Activated CD4-positive, alpha-beta memory T cell treated with anti-CD3 and anti-CD28 coated beads for 36 hours (primary cell): ENCODE measurements at regions of chr4 and their contacts with region 1.

Region 1: GRCh38 chr4:56301181-56302076 is 85.9 kb downstream of the AASDH start:
- DNase-seq: peak; percentile 78
- H3K4me3 Mint-ChIP-seq: peak overlapping the region; percentile 13
- H3K27ac Mint-ChIP-seq: no peak overlapping the region
- H3K4me1 Mint-ChIP-seq: peaks cover 7% of the 10 kb centered on the region
- H3K27me3 Mint-ChIP-seq: no peaks in the 10 kb centered on the region

Region 2: DNA sequence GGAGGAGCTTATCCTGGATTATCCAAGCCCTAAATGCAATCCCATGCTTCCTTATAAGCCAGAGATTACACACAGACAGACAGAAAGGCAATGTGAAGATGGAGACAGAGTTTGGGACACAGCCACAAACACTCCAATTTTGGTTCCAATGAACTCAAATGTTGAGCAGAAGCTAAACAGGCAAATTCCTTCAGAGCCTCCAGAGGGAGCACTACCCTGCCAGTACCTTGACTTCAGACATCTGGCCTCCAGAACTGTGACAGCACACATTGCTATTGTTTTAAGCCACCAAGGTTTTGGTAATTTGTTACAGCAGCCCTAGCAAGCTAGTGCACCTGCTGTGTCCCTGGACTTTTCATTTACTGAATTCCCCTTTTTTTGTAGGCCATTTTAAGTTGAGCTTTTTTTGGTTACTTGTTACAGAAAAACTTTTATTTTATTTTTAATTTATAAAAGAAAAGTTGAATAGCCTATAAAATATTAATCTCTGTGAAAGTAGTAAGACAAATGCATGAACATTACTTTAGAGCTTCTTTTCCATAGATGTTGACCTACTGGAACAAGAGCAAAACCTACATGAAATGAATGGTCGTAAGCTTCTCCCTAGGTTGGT is 988.8 kb before region 1 on chr4:
- CTCF ChIA-PET with region 1: no interaction called
- POLR2A ChIA-PET with region 1: no interaction called
- intact Hi-C with region 1: loop called (anchors 10 kb)
- DNase-seq: peak; percentile 44
- H3K4me3 Mint-ChIP-seq: no peak overlapping the region
- H3K27ac Mint-ChIP-seq: no peak overlapping the region
- H3K4me1 Mint-ChIP-seq: peaks cover 5% of the 10 kb centered on the region
- H3K27me3 Mint-ChIP-seq: peaks cover 2% of the 10 kb centered on the region

Region 3: GRCh38 chr4:56048702-56049431 is 252.6 kb before region 1 on chr4:
- CTCF ChIA-PET with region 1: no interaction called
- POLR2A ChIA-PET with region 1: no interaction called
- intact Hi-C with region 1: loop called (anchors 5 kb)
- DNase-seq: peak; percentile 66
- H3K4me3 Mint-ChIP-seq: peak overlapping the region; percentile 52
- H3K27ac Mint-ChIP-seq: no peak overlapping the region
- H3K4me1 Mint-ChIP-seq: peaks cover 12% of the 10 kb centered on the region
- H3K27me3 Mint-ChIP-seq: peaks cover 46% of the 10 kb centered on the region

Region 4: GRCh38 chr4:56129431-56129861 is 172.0 kb before region 1 on chr4:
- CTCF ChIA-PET with region 1: interaction called, 9 read pairs
- POLR2A ChIA-PET with region 1: no interaction called
- intact Hi-C with region 1: loop called (anchors 1 kb)
- DNase-seq: peak; percentile 25
- H3K4me3 Mint-ChIP-seq: no peak overlapping the region
- H3K27ac Mint-ChIP-seq: no peak overlapping the region
- H3K4me1 Mint-ChIP-seq: no peaks in the 10 kb centered on the region
- H3K27me3 Mint-ChIP-seq: peaks cover 8% of the 10 kb centered on the region

Region 5: DNA sequence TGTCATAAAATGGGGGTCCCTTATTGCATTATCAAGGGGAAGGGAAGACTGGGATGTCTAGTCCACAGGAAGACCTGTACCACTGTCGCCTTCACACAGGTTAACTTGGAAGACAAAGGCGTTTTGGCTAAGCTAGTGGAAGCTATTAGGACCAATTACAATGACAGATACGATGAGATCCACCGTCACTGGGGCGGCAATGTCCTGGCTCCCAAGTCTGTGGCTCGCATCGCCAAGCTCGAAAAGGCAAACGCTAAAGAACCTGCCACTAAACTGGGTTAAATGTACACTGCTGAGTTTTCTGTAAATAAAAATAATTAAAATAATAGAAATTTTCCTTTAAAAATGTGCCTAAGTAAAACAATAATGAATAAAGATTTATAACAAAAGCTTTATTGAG is 55.2 kb after region 1 on chr4:
- CTCF ChIA-PET with region 1: no interaction called
- POLR2A ChIA-PET with region 1: no interaction called
- intact Hi-C with region 1: no loop called
- DNase-seq: no peak
- H3K4me3 Mint-ChIP-seq: no peak overlapping the region
- H3K27ac Mint-ChIP-seq: no peak overlapping the region
- H3K4me1 Mint-ChIP-seq: no peaks in the 10 kb centered on the region
- H3K27me3 Mint-ChIP-seq: no peaks in the 10 kb centered on the region

Region 6: DNA sequence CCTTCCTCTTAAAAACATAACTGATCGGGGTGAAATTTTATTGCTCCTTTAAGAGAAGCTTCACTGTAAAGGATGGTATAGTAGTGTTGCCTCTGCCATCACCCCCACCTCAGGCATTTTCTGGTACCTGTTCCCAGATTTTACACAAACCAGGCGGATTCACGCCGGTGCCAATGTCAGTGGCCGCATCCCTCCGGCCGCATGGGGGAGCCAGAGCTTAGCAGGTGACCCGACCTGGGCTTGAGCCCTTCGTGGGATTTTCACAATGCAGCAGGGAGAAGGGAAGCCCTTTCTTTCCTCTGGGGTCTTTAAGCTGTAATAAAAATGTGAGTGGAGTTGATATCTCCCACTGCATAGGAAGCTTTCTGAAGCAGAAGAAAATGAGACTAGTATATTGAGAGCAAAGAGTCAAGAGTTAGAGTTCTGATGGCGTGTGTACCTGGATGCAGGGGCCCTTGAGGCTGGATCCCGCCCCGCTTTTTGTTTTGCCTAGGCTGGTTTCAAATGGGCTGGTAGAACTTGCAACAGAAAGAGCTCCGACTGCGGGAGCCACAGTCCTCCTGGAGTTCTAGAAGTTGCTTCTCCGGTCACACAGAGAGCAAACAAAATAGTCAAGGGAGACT is 736.7 kb after region 1 on chr4:
- CTCF ChIA-PET with region 1: no interaction called
- POLR2A ChIA-PET with region 1: no interaction called
- intact Hi-C with region 1: no loop called
- DNase-seq: peak; percentile 13
- H3K4me3 Mint-ChIP-seq: no peak overlapping the region
- H3K27ac Mint-ChIP-seq: no peak overlapping the region
- H3K4me1 Mint-ChIP-seq: no peaks in the 10 kb centered on the region
- H3K27me3 Mint-ChIP-seq: peaks cover 8% of the 10 kb centered on the region